ENCODE measurements at regions of chr7 and their contacts with region 1.

Region 1: DNA sequence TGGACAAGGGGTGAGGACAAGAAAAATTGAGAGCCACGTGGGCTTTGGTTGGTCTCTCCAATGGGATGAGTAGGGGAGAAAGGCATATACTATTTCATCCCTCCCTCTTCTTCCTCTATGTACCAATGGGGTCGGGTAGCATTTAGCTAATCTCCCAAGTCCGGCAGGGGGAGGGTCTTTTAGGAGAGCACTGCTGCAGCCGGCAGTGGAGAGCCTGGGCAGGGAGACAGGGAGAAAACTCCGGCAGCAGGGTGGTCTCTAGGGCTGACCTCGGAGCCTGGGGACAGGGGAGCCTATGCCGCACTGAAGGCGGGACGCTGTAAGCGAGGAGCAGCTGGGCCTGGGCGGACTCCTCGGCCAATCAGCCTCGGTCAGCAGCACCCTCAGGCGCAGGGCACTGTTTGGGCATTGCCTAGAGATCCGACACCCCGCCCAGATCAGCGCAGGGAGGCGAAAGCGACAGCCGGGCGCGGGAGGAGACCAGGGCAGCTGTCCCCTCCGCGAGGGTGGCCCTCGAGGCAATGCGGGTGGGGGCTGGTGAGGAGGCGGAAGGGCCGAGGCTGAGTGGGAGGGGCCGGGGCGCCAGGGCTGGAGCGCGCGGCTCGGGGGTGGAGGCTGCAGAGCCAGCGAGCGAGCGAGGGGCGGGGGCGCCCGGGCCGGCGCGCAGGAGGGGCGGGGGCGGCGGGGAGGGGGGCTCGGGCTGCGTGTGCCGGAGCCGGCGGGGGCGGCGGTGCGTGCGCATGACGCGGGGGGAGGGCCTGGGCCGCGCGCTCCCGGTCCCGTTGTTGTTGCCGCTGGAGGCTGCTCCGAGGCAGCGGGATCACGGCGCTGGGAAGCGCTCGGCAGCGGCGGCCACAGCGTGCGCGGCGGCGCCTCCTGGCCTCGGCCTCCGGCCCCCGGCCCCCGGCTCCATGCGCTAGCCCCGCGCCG is at the start of gene AGAP3:
- DNase-seq: peak; percentile 75 to 94 (median 83)
- H3K4me3 ChIP-seq: peak within 1 kb of the TSS; percentile 58 to 96 (median 85)
- H3K27ac ChIP-seq: peak within 1 kb of the TSS; percentile 88 to 99 (median 95)
- H3K27me3 ChIP-seq: no peaks in the 10 kb centered on the region
- CTCF ChIP-seq: peak in 3 of 56 donors; percentile 10 to 28 (median 12)
- total RNA-seq, gene AGAP3: 309 to 533 (median 426) TPM

Region 2: DNA sequence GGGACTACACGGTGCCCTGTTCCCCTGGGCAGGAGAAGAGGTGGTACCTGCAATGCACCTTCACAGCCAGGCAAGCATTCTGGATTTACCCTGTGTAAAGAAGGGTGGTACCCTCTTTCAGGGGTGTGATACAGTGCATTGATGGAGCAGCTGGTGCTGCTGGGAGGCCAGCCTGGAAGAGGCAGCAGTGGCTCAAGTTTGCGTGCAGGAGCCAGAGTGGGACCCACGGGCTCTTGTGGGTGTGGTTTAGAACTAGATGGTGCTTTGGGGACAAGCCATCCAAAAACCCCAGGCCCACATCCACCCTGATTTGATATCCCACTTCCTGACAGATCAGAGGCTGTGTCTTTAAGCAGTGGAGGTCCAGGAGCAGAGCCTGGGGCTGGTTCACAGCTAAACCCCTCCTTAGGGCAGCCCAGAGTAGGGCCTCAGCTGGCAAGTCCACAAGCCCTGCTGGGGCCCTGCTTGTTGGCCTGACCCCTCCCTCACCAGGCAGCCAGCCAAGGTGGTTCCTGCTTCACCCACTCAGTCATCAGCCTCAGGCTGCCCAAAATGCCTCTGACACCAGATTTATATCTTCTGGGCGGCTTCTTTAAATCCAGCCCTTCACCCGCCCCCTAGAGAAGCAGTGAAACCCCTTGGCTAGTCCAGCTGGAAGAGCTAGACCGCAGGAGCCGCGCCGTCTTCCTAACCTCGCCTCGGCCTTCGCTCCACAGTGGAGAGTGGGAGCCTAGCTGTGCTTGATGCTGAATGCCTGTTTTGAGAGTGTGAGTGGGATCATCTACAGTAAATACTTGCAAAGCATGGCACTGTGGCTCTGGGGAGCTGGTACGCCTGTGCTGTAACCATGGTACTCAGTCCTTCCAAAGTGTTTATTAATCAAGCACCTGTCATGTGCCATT is 39.1 kb before region 1 on chr7:
- intact Hi-C with region 1: no loop called
- DNase-seq: no peak
- H3K4me3 ChIP-seq: no peak overlapping the region
- H3K27ac ChIP-seq: peak overlapping the region in 21 of 59 donors; percentile 4 to 63 (median 30)
- H3K27me3 ChIP-seq: no peaks in the 10 kb centered on the region
- CTCF ChIP-seq: no peak

Region 3: GRCh38 chr7:151110941-151111645 is 25.1 kb after region 1 on chr7:
- intact Hi-C with region 1: loop called in 1 of 2 experiments (anchors 2 kb)
- DNase-seq: peak; percentile 65 to 86 (median 77)
- H3K4me3 ChIP-seq: peak overlapping the region in 5 of 59 donors; percentile 7 to 29 (median 10)
- H3K27ac ChIP-seq: peak overlapping the region in 7 of 59 donors; percentile 2 to 44 (median 16)
- H3K27me3 ChIP-seq: no peaks in the 10 kb centered on the region
- CTCF ChIP-seq: peak; percentile 63 to 96 (median 91)

Region 4: DNA sequence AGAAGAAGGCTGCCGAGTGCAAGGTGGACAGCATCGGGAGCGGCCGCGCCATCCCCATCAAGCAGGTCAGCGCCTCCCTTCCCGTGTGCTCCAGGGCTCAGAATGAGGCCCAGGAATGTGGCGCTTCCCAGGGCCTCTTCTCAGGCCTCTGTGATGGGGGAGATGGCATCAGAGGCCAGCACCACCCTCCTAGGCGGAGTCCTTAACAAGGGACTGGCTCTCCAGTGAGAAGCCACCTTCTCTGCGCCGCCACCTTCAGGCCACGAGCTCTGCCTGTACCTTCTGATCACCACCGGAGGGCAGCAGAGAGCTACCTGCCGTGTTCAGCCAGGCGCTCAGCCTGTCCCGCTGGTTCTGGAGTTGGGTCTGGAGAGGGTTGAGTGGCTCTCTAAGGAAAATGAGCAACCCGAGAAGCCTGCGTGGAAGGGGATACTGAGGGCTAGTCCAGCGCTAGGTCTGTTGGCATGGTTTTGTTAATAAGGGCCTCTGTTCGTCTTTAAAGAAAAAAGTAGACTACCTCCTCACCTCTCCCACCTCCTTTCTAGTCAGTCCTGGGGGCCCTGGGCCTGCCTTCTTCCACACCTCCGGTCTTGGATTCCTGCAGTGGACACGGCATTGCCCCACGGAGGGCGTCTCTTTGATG is 38.0 kb after region 1 on chr7:
- intact Hi-C with region 1: loop called in 1 of 2 experiments (anchors 2 kb)
- DNase-seq: peak; percentile 73 to 93 (median 86)
- H3K4me3 ChIP-seq: no peak overlapping the region
- H3K27ac ChIP-seq: peak overlapping the region in 14 of 59 donors; percentile 4 to 55 (median 22)
- H3K27me3 ChIP-seq: no peaks in the 10 kb centered on the region
- CTCF ChIP-seq: peak; percentile 83 to 100 (median 99)

Region 5: GRCh38 chr7:151198945-151199848 is 113.2 kb after region 1 on chr7:
- intact Hi-C with region 1: no loop called
- DNase-seq: peak in 2 of 10 donors; percentile 35 to 39
- H3K4me3 ChIP-seq: peak overlapping the region in 21 of 59 donors; percentile 0 to 39 (median 20)
- H3K27ac ChIP-seq: peak overlapping the region in 6 of 59 donors; percentile 19 to 52 (median 25)
- H3K27me3 ChIP-seq: peaks cover 0 to 5% (median 0%) of the 10 kb centered on the region in 45 donors
- CTCF ChIP-seq: no peak

Measured in dorsolateral prefrontal cortex (tissue), 120 donors.